CD8-positive, alpha-beta T cell (primary cell): ENCODE measurements at regions of chr17 and their contacts with region 1.

Region 1: GRCh38 chr17:29116804-29117772 is 63.1 kb downstream of the MYO18A start:
- DNase-seq: peak; percentile 58 to 86 (median 80)
- ATAC-seq: peak; percentile 90
- H3K4me3 ChIP-seq: no peak overlapping the region
- H3K4me3 Mint-ChIP-seq: no peak overlapping the region
- H3K27ac ChIP-seq: no peak overlapping the region
- H3K27ac Mint-ChIP-seq: no peak overlapping the region
- H3K4me1 ChIP-seq: peaks cover 3% of the 10 kb centered on the region
- H3K4me1 Mint-ChIP-seq: peaks cover 2% of the 10 kb centered on the region
- H3K27me3 ChIP-seq: no peaks in the 10 kb centered on the region
- H3K27me3 Mint-ChIP-seq: no peaks in the 10 kb centered on the region
- CTCF ChIP-seq: peak; percentile 94

Region 2: DNA sequence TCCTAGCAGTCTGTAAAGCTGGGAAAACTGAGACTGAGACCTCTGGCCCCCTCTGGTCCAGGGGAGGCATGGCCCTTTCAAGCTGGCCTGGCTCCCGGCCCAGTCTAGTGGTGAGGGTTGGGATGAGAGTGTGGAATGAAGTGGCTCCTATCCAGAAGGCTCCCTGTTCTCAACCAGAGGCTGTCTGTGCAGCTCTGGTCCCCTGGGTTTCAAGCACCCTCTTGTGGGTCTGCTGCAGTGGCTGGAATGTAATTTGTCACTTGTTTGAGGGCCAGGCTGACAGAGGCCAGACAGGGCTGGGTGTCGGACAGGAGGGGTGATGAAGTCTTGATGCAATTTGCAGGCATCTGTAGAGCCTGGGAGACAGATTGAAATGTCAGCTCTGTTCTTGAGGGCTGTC is 143.7 kb before region 1 on chr17:
- CTCF ChIA-PET with region 1: interaction called, 33 read pairs
- POLR2A ChIA-PET with region 1: no interaction called
- intact Hi-C with region 1: no loop called
- DNase-seq: no peak
- ATAC-seq: no peak
- H3K4me3 ChIP-seq: no peak overlapping the region
- H3K4me3 Mint-ChIP-seq: no peak overlapping the region
- H3K27ac ChIP-seq: no peak overlapping the region
- H3K27ac Mint-ChIP-seq: no peak overlapping the region
- H3K4me1 ChIP-seq: no peaks in the 10 kb centered on the region
- H3K4me1 Mint-ChIP-seq: no peaks in the 10 kb centered on the region
- H3K27me3 ChIP-seq: no peaks in the 10 kb centered on the region
- H3K27me3 Mint-ChIP-seq: no peaks in the 10 kb centered on the region
- CTCF ChIP-seq: no peak

Region 3: GRCh38 chr17:29133146-29133713 is 16.1 kb after region 1 on chr17:
- CTCF ChIA-PET with region 1: interaction called, 80 read pairs
- POLR2A ChIA-PET with region 1: interaction called, 3 read pairs
- intact Hi-C with region 1: no loop called
- DNase-seq: no peak
- ATAC-seq: no peak
- H3K4me3 ChIP-seq: no peak overlapping the region
- H3K4me3 Mint-ChIP-seq: no peak overlapping the region
- H3K27ac ChIP-seq: no peak overlapping the region
- H3K27ac Mint-ChIP-seq: no peak overlapping the region
- H3K4me1 ChIP-seq: peaks cover 7% of the 10 kb centered on the region
- H3K4me1 Mint-ChIP-seq: peaks cover 39% of the 10 kb centered on the region
- H3K27me3 ChIP-seq: no peaks in the 10 kb centered on the region
- H3K27me3 Mint-ChIP-seq: no peaks in the 10 kb centered on the region
- CTCF ChIP-seq: no peak

Region 4: DNA sequence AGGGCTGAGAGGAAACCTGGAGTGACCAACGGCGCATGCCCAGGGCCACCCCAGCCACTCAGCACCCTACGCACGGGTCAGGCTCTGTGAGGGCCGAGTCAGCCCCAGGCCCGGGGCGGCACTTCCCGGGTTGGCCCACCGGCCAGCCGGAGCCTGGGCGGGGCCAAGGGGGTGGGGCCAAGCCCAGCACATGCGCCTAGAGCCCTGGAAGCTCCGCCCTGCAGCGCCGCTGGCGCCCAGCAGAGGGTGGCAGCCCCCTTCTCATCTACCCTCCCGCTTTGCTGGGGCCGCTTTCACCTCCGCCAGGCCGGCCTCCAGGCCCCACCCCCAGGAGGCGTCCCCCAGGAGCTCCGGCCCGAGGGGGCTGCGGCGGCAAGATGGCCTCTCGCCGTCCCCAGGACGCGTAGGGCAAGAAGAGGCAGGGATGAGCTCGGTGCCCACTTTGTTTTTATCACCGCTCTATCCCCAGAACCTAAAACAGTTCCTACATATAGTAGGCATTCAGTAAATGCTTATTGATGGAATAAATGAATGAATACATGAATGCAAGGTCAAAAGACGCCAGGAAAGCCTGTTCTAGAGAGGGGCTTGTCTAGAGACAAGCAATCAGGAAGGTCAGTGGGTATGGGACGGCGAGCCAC is 31.8 kb after region 1 on chr17:
- CTCF ChIA-PET with region 1: interaction called, 71 read pairs
- POLR2A ChIA-PET with region 1: interaction called, 3 read pairs
- intact Hi-C with region 1: no loop called
- DNase-seq: peak; percentile 82 to 95 (median 91)
- ATAC-seq: peak; percentile 97
- H3K4me3 ChIP-seq: peak overlapping the region; percentile 54 to 56
- H3K4me3 Mint-ChIP-seq: peak overlapping the region; percentile 76
- H3K27ac ChIP-seq: peak overlapping the region in 1 of 2 experiments; percentile 88
- H3K27ac Mint-ChIP-seq: peak overlapping the region; percentile 87
- H3K4me1 ChIP-seq: peaks cover 23% of the 10 kb centered on the region
- H3K4me1 Mint-ChIP-seq: peaks cover 33% of the 10 kb centered on the region
- H3K27me3 ChIP-seq: no peaks in the 10 kb centered on the region
- H3K27me3 Mint-ChIP-seq: no peaks in the 10 kb centered on the region
- CTCF ChIP-seq: peak; percentile 98

Region 5: GRCh38 chr17:29219378-29220047 is 102.4 kb after region 1 on chr17:
- CTCF ChIA-PET with region 1: interaction called, 14 read pairs
- POLR2A ChIA-PET with region 1: no interaction called
- intact Hi-C with region 1: no loop called
- DNase-seq: peak; percentile 35 to 81 (median 75)
- ATAC-seq: peak; percentile 86
- H3K4me3 ChIP-seq: no peak overlapping the region
- H3K4me3 Mint-ChIP-seq: no peak overlapping the region
- H3K27ac ChIP-seq: no peak overlapping the region
- H3K27ac Mint-ChIP-seq: no peak overlapping the region
- H3K4me1 ChIP-seq: no peaks in the 10 kb centered on the region
- H3K4me1 Mint-ChIP-seq: peaks cover 5% of the 10 kb centered on the region
- H3K27me3 ChIP-seq: no peaks in the 10 kb centered on the region
- H3K27me3 Mint-ChIP-seq: no peaks in the 10 kb centered on the region
- CTCF ChIP-seq: peak; percentile 78

Region 6: DNA sequence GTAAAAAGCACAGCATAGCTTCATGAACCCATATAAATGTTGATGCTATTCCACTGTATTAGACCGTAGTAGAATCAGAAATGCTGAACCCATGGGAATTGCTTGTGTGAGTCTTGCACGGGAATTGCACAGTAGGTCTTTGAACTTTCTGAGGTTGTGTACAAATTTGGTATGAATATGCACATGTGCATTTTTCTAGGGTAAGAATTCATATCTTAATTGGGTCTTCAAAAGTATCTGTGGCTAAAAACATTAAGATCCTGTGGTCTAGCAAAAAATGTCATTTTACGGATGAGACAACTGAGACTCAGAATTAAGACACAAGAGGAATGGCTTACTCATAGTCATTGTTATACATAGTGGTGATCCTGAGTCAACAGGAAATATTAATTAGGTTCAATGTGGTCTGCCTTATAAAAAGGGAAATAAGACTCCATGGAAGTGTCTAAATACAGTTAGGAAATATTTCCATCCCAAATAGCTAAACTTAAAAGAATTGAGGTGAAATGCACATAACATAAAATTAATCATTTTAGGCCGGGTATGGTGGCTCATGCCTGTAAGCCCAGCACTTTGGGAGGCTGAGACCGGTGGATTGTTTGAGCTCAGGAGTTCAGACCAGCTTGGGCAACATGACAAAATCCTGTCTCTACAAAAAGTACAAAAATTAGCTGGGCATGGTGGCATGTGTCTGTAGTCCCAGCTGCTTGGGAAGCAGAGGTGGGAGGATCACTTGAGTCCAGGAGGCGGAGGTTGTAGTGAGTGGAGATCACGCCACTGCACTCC is 295.9 kb after region 1 on chr17:
- CTCF ChIA-PET with region 1: no interaction called
- POLR2A ChIA-PET with region 1: no interaction called
- intact Hi-C with region 1: no loop called
- DNase-seq: no peak
- ATAC-seq: no peak
- H3K4me3 ChIP-seq: no peak overlapping the region
- H3K4me3 Mint-ChIP-seq: no peak overlapping the region
- H3K27ac ChIP-seq: no peak overlapping the region
- H3K27ac Mint-ChIP-seq: peak overlapping the region; percentile 16
- H3K4me1 ChIP-seq: no peaks in the 10 kb centered on the region
- H3K4me1 Mint-ChIP-seq: peaks cover 35% of the 10 kb centered on the region
- H3K27me3 ChIP-seq: no peaks in the 10 kb centered on the region
- H3K27me3 Mint-ChIP-seq: no peaks in the 10 kb centered on the region
- CTCF ChIP-seq: no peak